Heart left ventricle (tissue), 16 donors: ENCODE measurements at regions of chr3 and their contacts with region 1.

Region 1: GRCh38 chr3:41716471-41716870 is 245.4 kb downstream of the ULK4 start:
- DNase-seq: no peak
- ATAC-seq: no peak
- H3K4me3 ChIP-seq: no peak overlapping the region
- H3K27ac ChIP-seq: no peak overlapping the region
- H3K4me1 ChIP-seq: peaks cover 0 to 8% (median 0%) of the 10 kb centered on the region in 12 donors
- H3K27me3 ChIP-seq: no peaks in the 10 kb centered on the region
- CTCF ChIP-seq: peak in 10 of 12 donors; percentile 17 to 48 (median 30)
- POLR2A ChIP-seq: no peak

Region 2: GRCh38 chr3:41872157-41872556 is 155.7 kb after region 1 on chr3:
- intact Hi-C with region 1: loop called in 1 of 10 experiments (anchors 10 kb)
- DNase-seq: no peak
- ATAC-seq: no peak
- H3K4me3 ChIP-seq: no peak overlapping the region
- H3K27ac ChIP-seq: no peak overlapping the region
- H3K4me1 ChIP-seq: no peaks in the 10 kb centered on the region
- H3K27me3 ChIP-seq: no peaks in the 10 kb centered on the region
- CTCF ChIP-seq: no peak
- POLR2A ChIP-seq: no peak